ENCODE measurements at regions of chr3 and their contacts with region 1.

Region 1: DNA sequence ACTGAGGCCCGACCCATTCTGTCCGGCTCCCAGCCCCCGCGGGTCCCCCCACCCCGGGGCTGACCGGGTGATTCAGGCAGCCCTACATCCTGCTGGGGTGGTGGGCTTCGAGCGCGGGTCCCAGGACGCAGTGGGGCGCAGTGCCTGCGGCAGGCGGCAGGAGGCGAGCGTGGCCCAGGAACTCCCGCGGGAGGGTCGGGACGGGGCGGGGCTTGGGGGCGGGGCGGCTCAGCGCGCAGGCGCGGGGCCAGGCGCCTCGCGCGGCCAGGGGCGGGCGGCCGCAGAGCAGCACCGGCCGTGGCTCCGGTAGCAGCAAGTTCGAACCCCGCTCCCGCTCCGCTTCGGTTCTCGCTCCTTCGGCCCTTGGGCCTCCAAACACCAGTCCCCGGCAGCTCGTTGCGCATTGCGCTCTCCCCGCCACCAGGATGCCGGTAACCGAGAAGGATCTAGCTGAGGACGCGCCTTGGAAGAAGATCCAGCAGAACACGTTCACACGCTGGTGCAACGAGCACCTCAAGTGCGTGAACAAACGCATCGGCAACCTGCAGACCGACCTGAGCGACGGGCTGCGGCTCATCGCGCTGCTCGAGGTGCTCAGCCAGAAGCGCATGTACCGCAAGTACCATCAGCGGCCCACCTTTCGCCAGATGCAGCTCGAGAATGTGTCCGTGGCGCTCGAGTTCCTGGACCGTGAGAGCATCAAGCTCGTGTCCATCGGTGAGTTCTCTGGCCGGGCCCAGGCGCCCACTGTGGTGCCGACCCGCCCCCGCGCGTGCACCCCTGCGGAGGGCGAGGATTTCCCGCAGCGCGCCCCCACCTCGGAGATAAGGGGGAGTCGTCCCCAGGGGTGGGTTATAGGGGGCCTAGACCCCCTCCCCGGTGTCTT is at the start of gene FLNB:
- DNase-seq: peak; percentile 81
- H3K4me3 Mint-ChIP-seq: peak within 1 kb of the TSS; percentile 92
- H3K27ac Mint-ChIP-seq: peak within 1 kb of the TSS; percentile 74
- H3K4me1 Mint-ChIP-seq: peaks cover 37% of the 10 kb centered on the region
- H3K27me3 Mint-ChIP-seq: no peaks in the 10 kb centered on the region
- total RNA-seq, gene FLNB: 47.7 to 48.0 TPM

Region 2: GRCh38 chr3:57961828-57962447 is 46.4 kb before region 1 on chr3:
- CTCF ChIA-PET with region 1: interaction called, 4 read pairs
- intact Hi-C with region 1: loop called (anchors 2 kb)
- DNase-seq: no peak
- H3K4me3 Mint-ChIP-seq: no peak overlapping the region
- H3K27ac Mint-ChIP-seq: no peak overlapping the region
- H3K4me1 Mint-ChIP-seq: peaks cover 7% of the 10 kb centered on the region
- H3K27me3 Mint-ChIP-seq: no peaks in the 10 kb centered on the region

Region 3: DNA sequence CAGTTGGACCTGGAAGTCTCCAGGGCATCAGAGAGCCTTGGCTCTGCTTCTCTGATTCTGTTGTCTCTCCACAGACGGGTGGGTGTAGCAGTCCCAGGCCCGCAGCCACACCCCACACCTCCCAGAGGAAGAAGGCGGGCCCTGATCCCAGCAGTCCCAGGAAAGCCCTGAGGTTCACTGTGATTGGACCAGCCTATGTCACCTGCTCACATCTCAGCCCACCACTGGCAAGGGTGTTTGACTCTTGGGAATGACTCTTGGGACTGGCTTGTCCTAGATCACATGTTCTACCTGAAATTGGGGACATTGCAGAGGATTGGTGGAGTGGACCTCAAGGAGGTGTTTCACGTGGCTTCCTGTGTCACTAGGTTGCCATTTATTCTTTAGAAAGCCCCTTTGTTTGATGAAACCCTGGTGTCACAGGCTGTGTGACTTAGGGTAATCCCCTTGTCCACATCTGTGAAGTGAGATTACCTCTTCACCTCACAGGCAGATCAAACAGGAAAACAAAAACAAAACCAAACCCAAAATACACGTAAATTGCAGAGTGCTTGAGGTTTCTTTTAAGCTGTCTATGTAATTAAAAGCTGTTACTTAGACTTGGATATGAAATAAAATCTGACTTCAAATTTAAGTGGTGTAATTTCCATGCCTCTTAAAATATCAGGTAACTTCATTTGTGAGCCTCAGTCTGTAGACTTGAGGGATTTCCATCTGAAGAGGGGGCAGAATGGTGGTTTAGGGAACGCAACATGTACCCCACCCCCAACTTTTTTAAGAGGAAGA is 26.5 kb after region 1 on chr3:
- CTCF ChIA-PET with region 1: interaction called, 6 read pairs
- intact Hi-C with region 1: loop called (anchors 1 kb)
- DNase-seq: peak; percentile 78
- H3K4me3 Mint-ChIP-seq: no peak overlapping the region
- H3K27ac Mint-ChIP-seq: peak overlapping the region; percentile 84
- H3K4me1 Mint-ChIP-seq: peaks cover 60% of the 10 kb centered on the region
- H3K27me3 Mint-ChIP-seq: no peaks in the 10 kb centered on the region

Region 4: DNA sequence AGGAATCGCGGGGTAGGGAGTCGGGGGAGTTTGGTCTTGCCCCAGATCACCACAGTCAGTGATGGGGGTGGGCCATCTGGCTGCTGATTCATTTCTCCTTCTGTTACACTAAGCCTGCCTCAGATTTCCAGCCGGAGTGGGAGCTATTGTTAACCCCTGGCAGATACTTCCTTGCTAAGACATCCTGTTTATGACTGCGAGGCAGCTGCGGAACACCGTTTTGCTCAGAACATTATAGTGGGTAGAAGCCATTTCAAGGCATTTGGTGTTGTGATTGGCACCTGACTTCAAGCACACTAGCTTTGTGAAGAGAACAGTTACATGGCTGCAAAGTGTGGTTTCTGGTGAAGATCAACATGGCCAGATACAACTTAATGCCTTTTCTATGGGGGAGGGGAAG is 73.7 kb after region 1 on chr3:
- CTCF ChIA-PET with region 1: interaction called, 3 read pairs
- intact Hi-C with region 1: loop called (anchors 1 kb)
- DNase-seq: peak; percentile 73
- H3K4me3 Mint-ChIP-seq: peak overlapping the region; percentile 23
- H3K27ac Mint-ChIP-seq: peak overlapping the region; percentile 79
- H3K4me1 Mint-ChIP-seq: peaks cover 63% of the 10 kb centered on the region
- H3K27me3 Mint-ChIP-seq: no peaks in the 10 kb centered on the region

Region 5: DNA sequence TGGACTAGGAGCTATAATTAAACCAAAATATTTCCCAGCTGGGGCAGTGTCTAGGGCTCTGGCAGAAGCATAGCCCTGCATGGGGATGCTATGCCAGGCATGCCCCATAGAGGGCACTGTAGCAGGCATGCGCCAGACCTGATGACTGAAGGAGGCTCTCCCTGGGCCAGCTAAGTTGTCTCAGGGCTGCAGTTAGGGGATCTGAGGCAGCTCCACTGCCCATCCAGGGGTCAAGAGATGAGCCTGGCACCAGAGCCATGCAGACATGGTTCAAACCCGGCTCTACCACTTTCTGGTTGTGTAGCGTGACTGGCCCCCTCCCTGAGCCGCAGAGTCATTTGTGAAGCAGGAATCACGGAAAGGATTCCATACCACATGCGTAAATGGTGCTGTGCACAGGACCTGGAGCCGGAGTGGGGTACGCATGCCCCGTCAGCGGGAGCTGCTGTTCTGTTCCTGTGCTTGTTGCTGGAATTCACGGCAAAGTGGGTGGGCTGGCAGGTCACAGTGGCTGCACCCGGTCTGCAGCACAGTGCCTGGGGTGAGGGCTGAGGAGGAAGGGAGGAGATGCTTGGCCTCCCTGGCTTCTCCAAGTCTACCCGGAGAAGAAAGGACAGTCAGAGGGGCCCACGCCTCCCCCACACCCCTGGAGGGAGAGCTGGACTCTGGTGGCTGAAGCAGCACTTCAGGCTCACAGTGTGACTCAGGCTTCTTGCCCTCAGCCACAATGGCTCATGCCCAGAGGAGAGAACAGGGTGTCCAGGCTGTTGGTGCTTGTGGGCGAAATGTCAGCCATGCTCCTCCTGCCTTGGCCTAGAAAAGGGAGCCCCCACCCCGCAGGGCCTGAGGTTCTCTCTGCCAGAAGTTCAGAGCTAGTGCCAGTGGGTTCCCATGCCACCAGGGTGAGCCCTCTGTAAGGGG is 159.3 kb after region 1 on chr3:
- CTCF ChIA-PET with region 1: interaction called, 50 read pairs
- intact Hi-C with region 1: no loop called
- DNase-seq: peak; percentile 79
- H3K4me3 Mint-ChIP-seq: no peak overlapping the region
- H3K27ac Mint-ChIP-seq: no peak overlapping the region
- H3K4me1 Mint-ChIP-seq: no peaks in the 10 kb centered on the region
- H3K27me3 Mint-ChIP-seq: no peaks in the 10 kb centered on the region

Region 6: DNA sequence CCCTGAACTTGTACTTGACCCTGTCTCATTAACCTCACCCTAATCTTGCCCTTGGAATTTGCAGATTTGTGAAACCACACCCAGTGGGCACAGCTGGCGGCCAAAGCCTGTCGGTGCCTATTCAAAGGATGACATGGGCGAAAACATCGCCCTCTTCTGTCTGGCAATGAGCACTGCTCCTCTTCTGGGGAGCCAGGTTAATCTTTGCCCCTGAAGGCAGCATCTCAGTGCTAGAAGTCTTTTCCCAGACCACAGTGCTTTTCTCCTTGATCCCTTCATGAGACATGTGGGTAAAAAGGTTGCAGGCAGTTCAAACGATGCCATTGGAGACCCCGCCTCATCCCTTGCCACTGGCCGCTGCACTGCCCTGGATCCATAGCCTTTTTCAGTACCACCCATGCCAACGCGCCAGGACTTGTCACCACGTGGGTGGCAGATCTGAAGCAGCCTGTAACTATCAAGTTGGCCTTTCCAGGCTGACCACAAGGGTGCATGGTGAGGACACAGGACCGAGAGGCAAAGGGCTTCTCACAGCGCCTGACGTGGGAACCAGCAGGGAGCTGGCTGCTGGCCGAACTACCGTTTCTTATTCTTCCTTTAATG is 208.9 kb after region 1 on chr3:
- CTCF ChIA-PET with region 1: interaction called, 16 read pairs
- intact Hi-C with region 1: loop called (anchors 1 kb)
- DNase-seq: peak; percentile 73
- H3K4me3 Mint-ChIP-seq: no peak overlapping the region
- H3K27ac Mint-ChIP-seq: no peak overlapping the region
- H3K4me1 Mint-ChIP-seq: peaks cover 33% of the 10 kb centered on the region
- H3K27me3 Mint-ChIP-seq: no peaks in the 10 kb centered on the region

Measured in activated naive CD4-positive, alpha-beta T cell treated with anti-CD3 and anti-CD28 coated beads for 36 hours (primary cell).